ENCODE measurements at regions of chr12 and their contacts with region 1.

Region 1: DNA sequence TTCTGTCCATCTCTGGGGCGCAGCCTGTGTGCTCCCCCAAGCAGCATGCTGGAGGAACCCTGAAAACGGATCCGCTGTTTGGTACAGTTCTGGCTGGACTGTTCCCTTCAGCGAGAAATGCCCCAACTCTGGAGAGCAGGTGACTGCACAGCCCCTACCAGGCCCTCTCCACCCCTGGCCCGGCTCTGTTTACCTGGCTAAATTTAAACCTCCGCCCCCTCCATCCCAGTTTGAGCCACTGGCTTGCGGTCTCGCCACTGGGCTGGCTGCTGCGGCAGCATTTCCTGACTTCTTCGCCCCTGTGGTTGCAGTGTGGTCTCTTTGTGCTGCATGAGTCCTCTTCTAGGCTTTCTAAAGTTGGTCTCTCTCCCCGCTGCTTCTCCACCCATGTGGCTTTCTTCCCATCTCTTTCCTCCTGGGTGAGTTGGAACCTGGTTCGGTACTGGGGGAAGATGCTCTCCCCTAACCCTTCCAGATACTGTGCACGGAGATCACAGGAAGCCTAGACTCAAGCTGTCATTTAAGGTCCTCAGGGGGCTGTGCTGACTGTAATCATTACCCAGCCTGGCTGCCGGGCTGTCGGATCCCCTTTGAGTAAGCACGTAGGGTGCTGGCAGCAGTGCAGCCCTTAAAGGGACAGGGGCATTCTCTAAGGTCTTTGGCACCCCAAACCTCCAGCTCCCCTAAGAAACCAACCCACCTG is 60.6 kb downstream of the FBXL14 start:
- DNase-seq: no peak
- ATAC-seq: 0 out of 6 replicates have a peak, but pooled peaks of 1 of the 2 experiments have one; percentile 9
- H3K4me3 ChIP-seq: no peak overlapping the region
- H3K27ac ChIP-seq: no peak overlapping the region
- H3K4me1 ChIP-seq: 0 out of 3 replicates have a peak, but pooled peaks cover 6% of the 10 kb centered on the region
- CTCF ChIP-seq: no peak
- EP300 ChIP-seq: no peak
- POLR2A ChIP-seq: no peak
- RAD21 ChIP-seq: no peak

Region 2: GRCh38 chr12:1544996-1545700 is 11.4 kb after region 1 on chr12:
- CTCF ChIA-PET with region 1: interaction called, 18 read pairs
- POLR2A ChIA-PET with region 1: no interaction called
- DNase-seq: peak in 1 of 2 experiments; percentile 54
- ATAC-seq: peak; percentile 62 to 70; a peak in 2 of 6 replicates
- H3K4me3 ChIP-seq: no peak overlapping the region
- H3K27ac ChIP-seq: no peak overlapping the region
- H3K4me1 ChIP-seq: peaks cover 9% of the 10 kb centered on the region; the same call in 2 of the 3 replicates
- CTCF ChIP-seq: peak; percentile 52
- EP300 ChIP-seq: no peak
- POLR2A ChIP-seq: no peak
- RAD21 ChIP-seq: peak; percentile 61 to 71

Region 3: DNA sequence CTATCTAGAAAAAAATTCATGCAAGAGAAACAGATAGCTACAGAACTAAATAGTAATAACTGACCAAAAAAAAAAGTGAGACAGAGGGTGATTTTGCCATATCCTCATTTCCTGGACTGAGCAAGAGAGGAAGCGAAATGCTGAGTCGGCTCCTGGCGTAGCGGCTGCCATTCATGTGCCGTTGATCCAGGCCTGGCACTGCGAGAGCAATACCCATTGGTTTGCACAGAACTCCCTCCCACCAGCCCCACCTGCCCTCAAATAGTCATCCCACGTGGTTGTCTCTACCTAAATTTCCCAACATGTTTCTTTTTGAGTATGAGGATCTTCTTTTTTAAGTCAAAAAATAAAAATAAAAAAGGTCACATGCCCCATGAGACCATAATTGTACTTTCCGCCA is 85.8 kb after region 1 on chr12:
- CTCF ChIA-PET with region 1: no interaction called
- POLR2A ChIA-PET with region 1: no interaction called
- DNase-seq: no peak
- ATAC-seq: no peak
- H3K4me3 ChIP-seq: no peak overlapping the region
- H3K27ac ChIP-seq: no peak overlapping the region
- H3K4me1 ChIP-seq: 0 out of 3 replicates have a peak, but pooled peaks cover 6% of the 10 kb centered on the region
- CTCF ChIP-seq: no peak
- EP300 ChIP-seq: no peak
- POLR2A ChIP-seq: no peak
- RAD21 ChIP-seq: no peak

Measured in A549 (cell line).